Astrocyte of the cerebellum (primary cell): ENCODE measurements at regions of chr1 and their contacts with region 1.

Region 1: DNA sequence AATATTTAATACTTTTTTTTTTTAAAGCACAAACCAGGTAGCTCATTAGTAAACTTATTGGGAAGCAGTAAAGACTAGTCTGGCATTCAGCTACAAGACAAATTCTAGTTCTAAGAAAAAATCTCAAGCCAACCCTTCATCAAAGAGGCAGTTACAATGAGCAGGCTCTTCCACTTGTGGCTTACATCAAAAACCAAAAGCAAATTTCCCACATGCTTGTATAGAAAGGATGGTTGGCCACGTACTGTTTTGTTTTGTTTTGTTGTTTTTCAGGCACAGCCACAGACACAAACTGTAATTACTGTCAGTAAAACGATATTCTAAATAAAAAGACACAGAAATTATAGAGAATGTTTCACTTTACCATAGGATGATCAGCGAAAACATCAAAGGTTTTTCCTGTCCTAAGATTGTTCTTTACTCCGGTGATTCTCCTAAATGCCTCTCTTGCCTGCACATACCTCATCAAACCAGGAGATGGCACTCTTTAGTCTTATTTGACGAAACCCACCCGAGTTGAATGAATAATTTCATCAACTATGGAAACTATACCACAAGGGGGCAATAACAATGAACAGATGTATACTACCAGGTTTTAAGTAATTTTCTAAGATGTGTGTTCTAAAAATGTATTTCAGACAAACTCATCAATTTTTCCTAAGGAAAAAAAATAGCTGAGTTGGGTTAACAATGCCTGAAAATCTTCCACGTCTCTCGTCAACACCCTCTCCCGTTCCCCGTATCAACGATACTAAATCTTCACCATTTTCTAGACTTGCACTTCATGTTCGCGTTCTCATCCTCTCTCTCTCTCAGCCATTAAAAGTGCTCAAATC is 26.9 kb downstream of the RPL5 start:
- DNase-seq: peak; percentile 74
- H3K4me3 ChIP-seq: no peak overlapping the region
- CTCF ChIP-seq: peak; percentile 86

Region 2: GRCh38 chr1:93021539-93022134 is 162.9 kb after region 1 on chr1:
- in situ Hi-C with region 1: loop called (anchors 25 kb)
- DNase-seq: peak; percentile 31
- H3K4me3 ChIP-seq: no peak overlapping the region
- CTCF ChIP-seq: peak; percentile 62